AG04450 (cell line): ENCODE measurements at regions of chr6 and their contacts with region 1.

Region 1: GRCh38 chr6:108492131-108492766 is 68.5 kb upstream of the FOXO3 start:
- DNase-seq: peak; percentile 7
- H3K4me3 ChIP-seq: no peak overlapping the region
- H3K27ac ChIP-seq: no peak overlapping the region
- H3K27me3 ChIP-seq: no peaks in the 10 kb centered on the region
- CTCF ChIP-seq: peak; percentile 70

Region 2: GRCh38 chr6:107977283-107977682 is 515.0 kb before region 1 on chr6:
- CTCF ChIA-PET with region 1: interaction called, 10 read pairs
- POLR2A ChIA-PET with region 1: no interaction called
- DNase-seq: no peak
- H3K4me3 ChIP-seq: no peak overlapping the region
- H3K27ac ChIP-seq: no peak overlapping the region
- H3K27me3 ChIP-seq: peaks cover 3% of the 10 kb centered on the region
- CTCF ChIP-seq: peak; percentile 54

Region 3: DNA sequence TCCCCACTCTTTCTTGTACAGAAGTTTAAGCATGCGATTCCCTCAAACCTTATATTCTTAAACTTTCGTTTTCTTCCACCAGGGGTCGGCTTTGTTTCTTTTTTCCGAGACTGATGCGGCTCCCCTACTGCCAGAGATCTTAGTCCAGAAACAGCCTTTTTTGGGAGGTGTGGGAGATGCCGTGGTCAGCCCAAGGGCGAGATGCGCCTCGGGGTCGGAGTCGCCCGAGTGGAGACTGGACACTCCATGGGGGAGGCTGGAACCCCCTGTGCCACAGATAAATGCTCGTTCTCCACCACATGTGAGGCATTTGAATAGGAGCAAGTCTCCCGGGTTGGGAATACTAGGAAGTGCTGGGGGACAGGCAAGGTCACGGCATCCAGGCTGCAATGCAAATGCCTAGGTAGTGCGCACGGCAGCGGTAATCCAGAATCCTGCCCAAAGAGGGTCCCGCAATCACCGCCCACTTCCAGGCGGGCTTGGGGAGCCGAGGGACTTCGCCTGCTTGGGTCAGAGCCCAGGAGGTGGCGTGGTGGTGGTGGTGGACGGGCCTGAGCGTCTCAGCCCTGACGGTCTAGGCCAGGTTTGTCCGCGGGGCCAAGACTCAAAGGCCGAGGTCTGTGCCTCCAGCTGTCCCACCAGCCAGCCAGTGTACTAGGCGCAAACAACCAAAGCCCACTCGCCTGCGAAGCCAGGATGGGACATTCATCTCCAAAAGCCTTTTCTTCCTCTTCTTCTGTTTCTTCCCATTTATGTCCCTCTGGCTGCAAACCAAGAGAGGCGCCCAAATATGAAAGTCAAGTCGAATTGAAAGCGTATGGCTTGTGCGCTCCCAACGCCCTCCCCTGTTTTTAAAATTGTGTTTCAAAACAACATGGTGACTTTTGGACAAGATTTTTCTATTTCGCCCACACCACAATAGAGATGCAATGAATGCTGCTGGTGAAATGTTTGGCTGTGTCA is 378.4 kb before region 1 on chr6:
- CTCF ChIA-PET with region 1: interaction called, 98 read pairs
- POLR2A ChIA-PET with region 1: no interaction called
- DNase-seq: peak; percentile 8
- H3K4me3 ChIP-seq: peak overlapping the region; percentile 42
- H3K27ac ChIP-seq: no peak overlapping the region
- H3K27me3 ChIP-seq: peaks cover 77% of the 10 kb centered on the region
- CTCF ChIP-seq: peak; percentile 65

Region 4: GRCh38 chr6:108260809-108261569 is 231.3 kb before region 1 on chr6 and contains the start of gene SNX3:
- CTCF ChIA-PET with region 1: interaction called, 15 read pairs
- POLR2A ChIA-PET with region 1: no interaction called
- DNase-seq: peak; percentile 90
- H3K4me3 ChIP-seq: peak within 1 kb of the TSS; percentile 86
- H3K27ac ChIP-seq: peak within 1 kb of the TSS; percentile 86
- H3K27me3 ChIP-seq: no peaks in the 10 kb centered on the region
- CTCF ChIP-seq: peak; percentile 32
- polyA plus RNA-seq, gene SNX3: 291 and 406 TPM in 2 replicates

Region 5: DNA sequence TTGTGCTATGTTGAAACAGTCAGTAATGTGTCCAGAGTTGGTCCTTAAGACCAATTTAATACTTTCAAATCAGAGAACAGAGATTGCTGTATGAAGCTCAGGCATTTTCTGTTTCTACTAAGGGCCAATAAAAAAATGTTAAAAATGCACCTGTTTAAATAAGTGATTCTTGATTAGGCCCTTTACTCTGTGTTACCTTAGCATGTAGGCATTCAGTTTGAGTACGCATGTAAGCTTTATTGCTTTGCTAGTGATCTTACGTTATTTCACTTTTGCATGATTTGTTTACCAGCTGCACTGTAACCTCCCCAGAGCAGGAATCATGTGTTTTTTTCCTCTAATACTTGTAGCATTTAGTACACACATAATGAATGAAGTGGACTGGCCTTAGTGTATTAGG is 136.4 kb before region 1 on chr6:
- CTCF ChIA-PET with region 1: no interaction called
- POLR2A ChIA-PET with region 1: no interaction called
- DNase-seq: no peak
- H3K4me3 ChIP-seq: no peak overlapping the region
- H3K27ac ChIP-seq: no peak overlapping the region
- H3K27me3 ChIP-seq: no peaks in the 10 kb centered on the region
- CTCF ChIP-seq: no peak

Region 6: GRCh38 chr6:108476847-108477430 is 15.3 kb before region 1 on chr6:
- CTCF ChIA-PET with region 1: interaction called, 20 read pairs
- POLR2A ChIA-PET with region 1: no interaction called
- DNase-seq: no peak
- H3K4me3 ChIP-seq: no peak overlapping the region
- H3K27ac ChIP-seq: no peak overlapping the region
- H3K27me3 ChIP-seq: no peaks in the 10 kb centered on the region
- CTCF ChIP-seq: no peak

Region 7: GRCh38 chr6:108526739-108527174 is 34.5 kb after region 1 on chr6:
- CTCF ChIA-PET with region 1: interaction called, 22 read pairs
- POLR2A ChIA-PET with region 1: no interaction called
- DNase-seq: peak; percentile 7
- H3K4me3 ChIP-seq: no peak overlapping the region
- H3K27ac ChIP-seq: no peak overlapping the region
- H3K27me3 ChIP-seq: peaks cover 9% of the 10 kb centered on the region
- CTCF ChIP-seq: peak; percentile 90